GM10248 (cell line): ENCODE measurements at regions of chr12 and their contacts with region 1.

Region 1: GRCh38 chr12:9750276-9751203 is 10.2 kb downstream of the CD69 start:
- DNase-seq: peak; percentile 54
- CTCF ChIP-seq: peak; percentile 66

Region 2: DNA sequence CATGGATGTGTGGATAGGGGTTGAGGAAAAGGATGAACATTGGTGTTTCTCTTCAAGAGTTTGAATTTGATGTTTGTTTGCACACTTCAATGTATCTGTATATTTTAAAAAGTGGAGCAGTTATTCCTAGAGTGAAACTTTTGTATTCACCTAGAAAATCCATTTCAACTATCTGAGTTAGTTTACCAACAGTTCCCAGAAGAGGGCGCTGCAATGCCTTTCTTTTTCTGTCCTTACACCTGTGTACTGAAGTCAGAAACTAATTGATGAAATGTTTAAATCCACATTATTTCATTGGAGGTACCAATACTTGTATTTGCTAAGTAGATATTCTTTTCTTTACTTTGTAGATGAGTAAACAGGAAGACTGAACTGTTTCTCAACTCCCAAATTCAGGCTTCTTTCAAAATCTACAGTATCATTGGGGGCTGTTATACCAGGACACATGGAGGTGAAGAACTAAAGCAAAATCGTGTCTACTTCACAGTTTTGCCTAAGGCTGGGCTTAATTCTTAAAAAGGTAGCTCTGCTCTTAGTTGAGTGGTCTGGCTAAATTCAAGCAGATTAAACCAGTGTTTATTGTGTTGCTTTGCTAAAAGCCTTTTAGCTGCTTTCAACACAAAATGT is 116.2 kb before region 1 on chr12:
- CTCF ChIA-PET with region 1: interaction called, 21 read pairs
- POLR2A ChIA-PET with region 1: no interaction called
- DNase-seq: peak; percentile 63
- CTCF ChIP-seq: peak; percentile 71

Region 3: GRCh38 chr12:9732921-9733461 is 17.5 kb before region 1 on chr12 and contains the start of gene CLECL1:
- CTCF ChIA-PET with region 1: interaction called, 10 read pairs
- POLR2A ChIA-PET with region 1: no interaction called
- DNase-seq: peak; percentile 47
- CTCF ChIP-seq: no peak

Region 4: GRCh38 chr12:9797722-9798619 is 47.4 kb after region 1 on chr12:
- CTCF ChIA-PET with region 1: interaction called, 287 read pairs
- POLR2A ChIA-PET with region 1: no interaction called
- DNase-seq: peak; percentile 41
- CTCF ChIP-seq: peak; percentile 87

Region 5: GRCh38 chr12:9925708-9926393 is 175.3 kb after region 1 on chr12:
- CTCF ChIA-PET with region 1: interaction called, 20 read pairs
- POLR2A ChIA-PET with region 1: no interaction called
- DNase-seq: no peak
- CTCF ChIP-seq: peak; percentile 42

Region 6: DNA sequence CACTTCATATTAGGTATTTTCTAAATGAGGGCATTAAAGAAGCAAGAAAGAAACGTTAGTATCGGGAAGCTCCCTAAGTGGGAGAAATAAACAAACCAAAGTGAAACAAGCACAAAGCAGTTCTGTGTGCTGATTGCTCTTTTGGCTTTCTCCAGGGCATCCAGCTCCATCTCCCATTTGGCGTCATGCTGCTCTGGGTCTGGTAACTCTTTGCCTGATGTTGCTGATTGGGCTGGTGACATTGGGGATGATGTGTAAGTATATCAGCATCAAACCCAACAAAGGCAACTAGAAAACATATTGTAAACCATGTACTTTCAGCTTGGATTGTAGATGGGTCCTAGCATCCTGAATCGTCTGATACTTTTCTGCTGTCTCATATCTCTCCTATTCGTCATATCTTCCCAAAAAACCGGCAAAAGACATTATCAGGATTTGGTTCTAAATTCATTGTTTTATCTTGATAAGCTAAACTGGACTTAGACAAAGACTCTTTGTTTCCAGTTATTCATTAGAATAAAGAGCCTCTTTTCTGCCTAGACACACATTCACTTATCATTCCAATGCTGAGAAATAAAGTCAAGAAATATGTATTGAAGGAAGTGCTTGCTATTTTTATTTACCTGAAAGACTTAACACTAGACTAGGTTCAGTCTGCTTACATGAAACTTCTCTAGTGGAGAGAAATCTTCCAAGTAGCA is 262.2 kb after region 1 on chr12:
- CTCF ChIA-PET with region 1: interaction called, 10 read pairs
- POLR2A ChIA-PET with region 1: no interaction called
- DNase-seq: no peak
- CTCF ChIP-seq: no peak